HEK293T (cell line): ENCODE measurements at regions of chr11 and their contacts with region 1.

Region 1: DNA sequence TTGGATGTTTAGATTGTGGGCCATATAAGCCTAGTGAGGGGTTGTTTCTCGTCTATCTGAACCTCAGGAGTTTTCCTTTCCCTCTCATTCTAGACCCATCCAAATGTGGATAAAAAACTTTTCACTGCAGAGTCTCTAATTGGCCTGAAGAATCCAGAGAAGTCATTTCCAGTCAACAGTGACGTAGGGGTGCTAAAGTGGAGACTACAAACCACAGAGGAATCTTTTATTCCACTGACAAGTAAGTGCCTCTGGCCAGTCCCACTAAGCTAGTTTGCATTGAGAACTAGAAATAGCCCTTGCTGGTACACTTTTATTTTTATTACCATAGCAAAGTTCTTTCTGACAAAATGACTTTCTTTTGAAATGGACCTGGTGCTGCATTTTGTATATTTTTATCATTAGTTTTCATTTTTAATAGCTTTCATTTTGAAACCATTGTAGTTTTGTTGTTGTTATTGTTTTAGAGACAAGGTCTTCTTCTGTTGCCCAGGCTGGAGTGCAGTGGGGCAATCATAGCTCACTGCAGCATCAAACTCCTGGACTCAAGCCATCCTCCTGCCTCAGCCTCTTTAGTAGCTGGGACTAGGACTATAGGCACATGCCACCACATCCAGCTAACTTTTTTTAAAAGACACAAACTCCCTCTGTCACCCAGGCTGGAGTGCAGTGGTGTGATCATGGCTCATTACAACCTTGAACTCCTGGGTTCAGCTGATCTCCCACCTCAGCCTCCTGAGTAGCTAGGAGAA is 14.6 kb upstream of the PHLDB1 start:
- DNase-seq: no peak

Region 2: GRCh38 chr11:118659314-118659952 is 66.6 kb after region 1 on chr11:
- CTCF ChIA-PET with region 1: interaction called, 13 read pairs
- POLR2A ChIA-PET with region 1: no interaction called
- DNase-seq: peak; percentile 97